ENCODE measurements at regions of chr14 and their contacts with region 1.

Region 1: GRCh38 chr14:35201066-35201465 is 78.7 kb downstream of the PRORP start:
- DNase-seq: no peak
- H3K4me3 Mint-ChIP-seq: peak overlapping the region; percentile 22
- H3K27ac Mint-ChIP-seq: peak overlapping the region; percentile 54
- H3K4me1 Mint-ChIP-seq: peaks cover 45% of the 10 kb centered on the region
- H3K27me3 Mint-ChIP-seq: no peaks in the 10 kb centered on the region

Region 2: GRCh38 chr14:35140718-35141581 is 60.1 kb before region 1 on chr14:
- intact Hi-C with region 1: loop called (anchors 5 kb)
- DNase-seq: no peak
- H3K4me3 Mint-ChIP-seq: no peak overlapping the region
- H3K27ac Mint-ChIP-seq: no peak overlapping the region
- H3K4me1 Mint-ChIP-seq: peaks cover 21% of the 10 kb centered on the region
- H3K27me3 Mint-ChIP-seq: no peaks in the 10 kb centered on the region

Region 3: GRCh38 chr14:35159742-35160409 is 41.2 kb before region 1 on chr14:
- intact Hi-C with region 1: loop called (anchors 5 kb)
- DNase-seq: no peak
- H3K4me3 Mint-ChIP-seq: no peak overlapping the region
- H3K27ac Mint-ChIP-seq: peak overlapping the region; percentile 54
- H3K4me1 Mint-ChIP-seq: peaks cover 45% of the 10 kb centered on the region
- H3K27me3 Mint-ChIP-seq: no peaks in the 10 kb centered on the region

Region 4: GRCh38 chr14:35221462-35221861 is 20.4 kb after region 1 on chr14:
- intact Hi-C with region 1: loop called (anchors 2 kb)
- DNase-seq: no peak
- H3K4me3 Mint-ChIP-seq: no peak overlapping the region
- H3K27ac Mint-ChIP-seq: peak overlapping the region; percentile 11
- H3K4me1 Mint-ChIP-seq: peaks cover 31% of the 10 kb centered on the region
- H3K27me3 Mint-ChIP-seq: no peaks in the 10 kb centered on the region

Measured in activated T-helper 2 cell treated with anti-CD3 and anti-CD28 coated beads, Interferon-gamma antibody, Interleukin-2, Interleukin-4, amounts not matched to agents 10 μg/mL and 5 μg/mL and 100 μg/mL, durations not matched to agents 14 hours and 24 hours and 36 hours (primary cell).